ENCODE measurements at regions of chr2 and their contacts with region 1.

Region 1: GRCh38 chr2:64644177-64645004 is 9.3 kb downstream of the SERTAD2 start:
- DNase-seq: peak; percentile 84
- H3K4me3 ChIP-seq: peak overlapping the region; percentile 3 to 53 (median 30)
- H3K27ac ChIP-seq: peak overlapping the region; percentile 87
- H3K4me1 ChIP-seq: peaks cover 29% of the 10 kb centered on the region
- H3K27me3 ChIP-seq: no peaks in the 10 kb centered on the region
- CTCF ChIP-seq: no peak
- POLR2A ChIP-seq: no peak

Region 2: DNA sequence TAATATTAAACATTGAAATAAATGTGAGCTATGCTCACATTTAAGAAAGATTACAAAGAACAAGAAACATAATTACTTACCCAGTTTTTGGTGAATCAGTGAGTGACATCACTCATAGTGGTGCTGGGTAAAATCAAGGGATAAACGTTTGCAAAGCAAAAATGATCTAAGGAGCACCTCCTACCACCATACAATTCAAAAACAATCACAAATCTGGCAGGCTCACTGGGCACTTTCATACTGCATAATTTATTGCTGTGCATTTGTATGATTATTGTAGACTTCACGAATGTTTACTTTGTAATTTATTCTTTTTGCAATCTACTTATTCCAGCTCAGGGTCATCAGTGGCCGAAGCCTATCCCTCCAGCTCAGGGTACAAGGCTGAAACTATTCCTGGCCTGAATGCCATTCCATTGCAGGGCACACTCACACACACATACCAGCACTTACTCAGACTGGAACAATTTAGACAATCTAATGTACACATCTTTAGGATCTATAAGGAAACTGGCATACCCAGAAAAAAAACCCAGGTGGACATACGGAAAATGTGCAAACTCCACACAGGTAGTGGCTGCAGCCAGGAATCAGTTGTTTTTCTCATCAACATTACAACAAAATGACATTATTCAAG is 85.8 kb before region 1 on chr2:
- CTCF ChIA-PET with region 1: no interaction called
- POLR2A ChIA-PET with region 1: no interaction called
- dilution Hi-C with region 1: no loop called
- intact Hi-C with region 1: no loop called
- DNase-seq: no peak
- H3K4me3 ChIP-seq: no peak overlapping the region
- H3K27ac ChIP-seq: no peak overlapping the region
- H3K4me1 ChIP-seq: no peaks in the 10 kb centered on the region
- H3K27me3 ChIP-seq: no peaks in the 10 kb centered on the region
- CTCF ChIP-seq: no peak
- POLR2A ChIP-seq: no peak

Region 3: DNA sequence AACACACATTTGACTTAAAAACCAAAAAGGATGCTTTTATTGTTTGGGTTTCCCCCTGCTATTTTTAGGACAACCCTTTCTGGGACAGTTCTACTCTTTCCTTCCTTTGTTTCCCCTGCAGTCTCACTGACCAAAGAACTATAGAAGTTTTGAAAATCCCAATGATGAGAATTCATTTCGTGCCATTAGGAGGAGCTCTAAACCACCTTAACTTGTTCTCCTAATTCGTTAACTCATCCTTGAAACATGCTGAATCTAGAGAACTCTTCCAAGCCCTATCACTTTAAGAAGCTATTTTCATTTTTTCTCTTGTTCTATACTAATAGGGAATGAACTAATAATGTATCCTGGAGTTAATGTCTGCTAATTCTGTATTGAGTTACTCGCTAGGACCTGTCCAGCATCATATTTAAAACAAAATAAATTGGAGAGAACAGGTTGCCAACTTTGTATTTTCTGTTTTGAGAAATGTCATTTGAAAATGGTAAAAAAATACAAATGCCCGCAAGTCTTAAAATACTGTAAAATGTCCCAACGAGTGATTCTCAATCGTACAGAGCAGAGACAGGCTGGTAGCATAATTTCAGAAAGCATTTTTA is 57.4 kb before region 1 on chr2:
- CTCF ChIA-PET with region 1: interaction called, 60 read pairs
- POLR2A ChIA-PET with region 1: interaction called, 4 read pairs
- dilution Hi-C with region 1: no loop called
- intact Hi-C with region 1: loop called (anchors 2 kb)
- DNase-seq: peak; percentile 69
- H3K4me3 ChIP-seq: no peak overlapping the region
- H3K27ac ChIP-seq: no peak overlapping the region
- H3K4me1 ChIP-seq: peaks cover 8% of the 10 kb centered on the region
- H3K27me3 ChIP-seq: no peaks in the 10 kb centered on the region
- CTCF ChIP-seq: peak; percentile 35 to 54
- POLR2A ChIP-seq: no peak

Region 4: GRCh38 chr2:64617631-64618151 is 26.7 kb before region 1 on chr2:
- CTCF ChIA-PET with region 1: interaction called, 14 read pairs
- POLR2A ChIA-PET with region 1: interaction called, 3 read pairs
- dilution Hi-C with region 1: no loop called
- intact Hi-C with region 1: no loop called
- DNase-seq: no peak
- H3K4me3 ChIP-seq: no peak overlapping the region
- H3K27ac ChIP-seq: no peak overlapping the region
- H3K4me1 ChIP-seq: no peaks in the 10 kb centered on the region
- H3K27me3 ChIP-seq: peaks cover 0 to 1% of the 10 kb centered on the region in 2 experiments
- CTCF ChIP-seq: no peak
- POLR2A ChIP-seq: no peak

Region 5: GRCh38 chr2:64742678-64743077 is 98.3 kb after region 1 on chr2:
- CTCF ChIA-PET with region 1: interaction called, 18 read pairs
- POLR2A ChIA-PET with region 1: no interaction called
- dilution Hi-C with region 1: no loop called
- intact Hi-C with region 1: no loop called
- DNase-seq: no peak
- H3K4me3 ChIP-seq: no peak overlapping the region
- H3K27ac ChIP-seq: no peak overlapping the region
- H3K4me1 ChIP-seq: peaks cover 4% of the 10 kb centered on the region
- H3K27me3 ChIP-seq: no peaks in the 10 kb centered on the region
- CTCF ChIP-seq: no peak
- POLR2A ChIP-seq: no peak

Region 6: DNA sequence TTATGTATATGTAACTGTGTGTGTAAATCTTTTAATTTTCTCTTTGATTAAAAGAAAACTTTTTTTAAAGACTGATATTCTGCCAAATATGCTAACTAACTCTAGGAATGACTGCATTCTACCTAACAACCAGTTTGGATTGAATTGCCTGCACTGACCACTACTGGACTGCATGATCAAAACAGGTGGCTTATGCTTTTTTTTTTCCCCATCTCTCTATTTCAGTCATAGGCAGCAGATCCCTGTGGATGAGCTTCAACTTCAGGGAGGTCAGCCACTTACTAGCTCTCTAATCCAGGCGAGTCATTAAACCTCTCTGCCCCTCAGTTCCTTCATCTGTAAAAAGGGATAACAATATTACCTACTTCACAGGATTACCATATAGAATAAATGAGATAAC is 147.9 kb after region 1 on chr2:
- CTCF ChIA-PET with region 1: interaction called, 69 read pairs
- POLR2A ChIA-PET with region 1: no interaction called
- dilution Hi-C with region 1: no loop called
- intact Hi-C with region 1: loop called (anchors 1 kb)
- DNase-seq: peak; percentile 43
- H3K4me3 ChIP-seq: no peak overlapping the region
- H3K27ac ChIP-seq: peak overlapping the region; percentile 82
- H3K4me1 ChIP-seq: peaks cover 53% of the 10 kb centered on the region
- H3K27me3 ChIP-seq: no peaks in the 10 kb centered on the region
- CTCF ChIP-seq: peak in 1 of 2 donors; percentile 21
- POLR2A ChIP-seq: no peak

Region 7: DNA sequence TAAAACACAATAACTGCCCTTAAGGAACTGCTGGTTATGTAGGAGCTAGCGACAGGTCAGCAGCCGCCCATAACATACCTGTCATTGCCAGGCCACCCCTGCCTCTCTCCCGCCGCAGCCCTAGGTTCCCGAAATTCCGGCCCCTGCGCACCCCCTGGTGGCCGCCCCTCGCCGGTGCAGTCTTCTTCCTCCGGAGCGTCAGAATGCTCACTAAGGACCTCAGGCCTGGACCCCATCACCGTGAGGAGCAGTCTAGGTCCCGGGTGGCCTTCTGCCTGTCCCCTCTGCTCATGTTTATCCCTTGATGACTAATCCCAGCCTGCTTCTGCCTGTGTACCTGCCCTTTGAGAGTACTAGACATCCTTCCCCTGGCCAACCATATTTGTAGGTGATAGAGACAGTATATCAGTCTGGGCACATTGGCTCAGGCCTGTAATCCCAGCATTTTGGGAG is 229.1 kb after region 1 on chr2:
- CTCF ChIA-PET with region 1: interaction called, 73 read pairs
- POLR2A ChIA-PET with region 1: no interaction called
- dilution Hi-C with region 1: no loop called
- intact Hi-C with region 1: no loop called
- DNase-seq: peak; percentile 63
- H3K4me3 ChIP-seq: no peak overlapping the region
- H3K27ac ChIP-seq: no peak overlapping the region
- H3K4me1 ChIP-seq: peaks cover 10% of the 10 kb centered on the region
- H3K27me3 ChIP-seq: no peaks in the 10 kb centered on the region
- CTCF ChIP-seq: peak; percentile 95 to 96
- POLR2A ChIP-seq: no peak

Measured in endothelial cell of umbilical vein (primary cell).